Endothelial cell of umbilical vein (primary cell): ENCODE measurements at regions of chr3 and their contacts with region 1.

Region 1: GRCh38 chr3:71064288-71064955 is 519.1 kb downstream of the FOXP1 start:
- DNase-seq: peak; percentile 76
- H3K4me3 ChIP-seq: peak overlapping the region; percentile 64 to 93 (median 84)
- H3K27ac ChIP-seq: peak overlapping the region; percentile 83
- H3K4me1 ChIP-seq: peaks cover 55% of the 10 kb centered on the region
- H3K27me3 ChIP-seq: no peaks in the 10 kb centered on the region
- CTCF ChIP-seq: no peak
- POLR2A ChIP-seq: peak; percentile 24

Region 2: GRCh38 chr3:70531063-70531657 is 533.3 kb before region 1 on chr3:
- CTCF ChIA-PET with region 1: no interaction called
- POLR2A ChIA-PET with region 1: no interaction called
- dilution Hi-C with region 1: no loop called
- intact Hi-C with region 1: loop called (anchors 5 kb)
- DNase-seq: peak; percentile 52
- H3K4me3 ChIP-seq: no peak overlapping the region
- H3K27ac ChIP-seq: no peak overlapping the region
- H3K4me1 ChIP-seq: no peaks in the 10 kb centered on the region
- H3K27me3 ChIP-seq: peaks cover 7 to 9% of the 10 kb centered on the region in 2 experiments
- CTCF ChIP-seq: peak; percentile 7 to 28
- POLR2A ChIP-seq: no peak

Region 3: GRCh38 chr3:71006810-71007785 is 57.3 kb before region 1 on chr3:
- CTCF ChIA-PET with region 1: interaction called, 23 read pairs
- POLR2A ChIA-PET with region 1: interaction called, 3 read pairs
- dilution Hi-C with region 1: no loop called
- intact Hi-C with region 1: loop called (anchors 1 kb)
- DNase-seq: peak; percentile 75
- H3K4me3 ChIP-seq: no peak overlapping the region
- H3K27ac ChIP-seq: peak overlapping the region; percentile 53
- H3K4me1 ChIP-seq: peaks cover 54% of the 10 kb centered on the region
- H3K27me3 ChIP-seq: no peaks in the 10 kb centered on the region
- CTCF ChIP-seq: peak in 1 of 2 donors; percentile 15
- POLR2A ChIP-seq: no peak

Region 4: DNA sequence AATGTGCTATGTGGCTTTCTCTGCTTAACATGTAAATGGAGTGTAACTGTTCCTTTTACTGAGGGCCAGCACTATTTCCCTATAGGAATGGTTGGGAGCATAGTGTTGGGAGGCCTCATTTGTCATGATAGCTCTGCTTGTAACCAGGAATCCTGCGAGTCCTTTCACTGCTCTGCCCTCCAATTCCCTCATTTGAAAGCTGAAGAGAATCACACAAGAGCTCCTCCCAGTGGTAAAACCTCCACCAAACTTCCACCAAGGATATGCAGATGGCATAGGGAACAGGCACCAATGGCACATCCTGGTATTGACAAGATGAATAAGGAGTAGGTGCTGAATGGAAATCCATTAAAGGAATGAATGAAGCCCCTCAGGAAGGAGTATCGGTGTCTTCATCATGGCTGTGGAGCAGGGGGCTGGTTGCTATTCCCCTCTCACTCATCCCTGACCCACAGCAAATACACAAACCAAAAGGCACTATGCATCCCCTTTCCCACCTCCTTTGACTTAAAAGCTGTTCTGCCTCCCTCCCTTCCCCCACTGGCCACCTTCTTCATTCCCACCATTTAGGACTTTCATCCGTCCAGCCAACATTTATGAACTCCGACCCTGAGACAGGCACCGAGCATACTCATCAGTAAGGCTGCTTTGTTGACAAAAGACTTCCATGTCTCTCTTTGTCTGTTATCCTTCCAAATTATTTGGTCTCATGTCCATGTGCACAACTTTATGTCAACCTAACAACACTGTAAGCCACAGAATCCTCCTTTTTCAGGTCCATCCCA is 41.7 kb before region 1 on chr3:
- CTCF ChIA-PET with region 1: no interaction called
- POLR2A ChIA-PET with region 1: no interaction called
- dilution Hi-C with region 1: no loop called
- intact Hi-C with region 1: no loop called
- DNase-seq: peak; percentile 52
- H3K4me3 ChIP-seq: no peak overlapping the region
- H3K27ac ChIP-seq: no peak overlapping the region
- H3K4me1 ChIP-seq: no peaks in the 10 kb centered on the region
- H3K27me3 ChIP-seq: no peaks in the 10 kb centered on the region
- CTCF ChIP-seq: peak; percentile 20 to 30
- POLR2A ChIP-seq: no peak

Region 5: GRCh38 chr3:71050538-71051258 is 13.7 kb before region 1 on chr3:
- CTCF ChIA-PET with region 1: interaction called, 12 read pairs
- POLR2A ChIA-PET with region 1: interaction called, 7 read pairs
- dilution Hi-C with region 1: no loop called
- intact Hi-C with region 1: loop called (anchors 1 kb)
- DNase-seq: peak; percentile 91
- H3K4me3 ChIP-seq: no peak overlapping the region
- H3K27ac ChIP-seq: peak overlapping the region; percentile 88
- H3K4me1 ChIP-seq: peaks cover 97% of the 10 kb centered on the region
- H3K27me3 ChIP-seq: no peaks in the 10 kb centered on the region
- CTCF ChIP-seq: no peak
- POLR2A ChIP-seq: no peak

Region 6: GRCh38 chr3:71130471-71131374 is 66.3 kb after region 1 on chr3:
- CTCF ChIA-PET with region 1: interaction called, 5 read pairs
- POLR2A ChIA-PET with region 1: no interaction called
- dilution Hi-C with region 1: no loop called
- intact Hi-C with region 1: loop called (anchors 2 kb)
- DNase-seq: peak; percentile 84
- H3K4me3 ChIP-seq: peak overlapping the region; percentile 24 to 91 (median 87)
- H3K27ac ChIP-seq: peak overlapping the region; percentile 93
- H3K4me1 ChIP-seq: peaks cover 24% of the 10 kb centered on the region
- H3K27me3 ChIP-seq: no peaks in the 10 kb centered on the region
- CTCF ChIP-seq: no peak
- POLR2A ChIP-seq: no peak

Region 7: DNA sequence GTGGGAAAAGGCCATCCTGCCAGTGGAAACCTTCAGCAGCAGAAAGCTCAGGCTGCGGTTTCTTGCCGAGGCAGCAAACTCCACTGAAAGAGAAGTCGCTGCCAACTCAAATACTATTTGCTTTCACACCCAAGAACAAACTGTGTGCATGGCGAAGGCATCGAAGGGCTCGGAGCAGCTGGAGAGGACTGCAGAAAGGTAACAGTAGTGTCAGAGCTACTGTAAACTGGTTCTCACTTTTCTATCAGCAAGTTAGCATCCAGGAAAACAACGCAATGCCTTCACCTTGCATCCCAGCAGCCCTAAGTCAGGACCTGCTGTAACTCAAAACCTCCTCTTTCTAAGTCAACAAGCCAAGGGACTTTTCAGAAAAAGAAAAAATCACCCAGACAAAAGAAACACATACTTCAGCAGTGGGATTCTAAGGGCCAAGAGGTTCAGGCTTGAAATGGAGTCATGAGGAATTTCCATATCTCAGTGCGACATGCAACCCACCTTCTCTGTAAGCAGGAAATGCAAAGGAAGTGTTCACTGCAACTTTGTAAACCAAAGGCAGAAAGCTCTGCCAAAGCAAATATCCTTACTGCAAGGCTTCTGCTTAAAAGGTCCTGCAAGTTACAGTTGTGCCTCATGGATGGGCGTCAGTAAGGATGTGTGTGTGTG is 325.6 kb after region 1 on chr3:
- CTCF ChIA-PET with region 1: no interaction called
- POLR2A ChIA-PET with region 1: no interaction called
- dilution Hi-C with region 1: no loop called
- intact Hi-C with region 1: loop called (anchors 5 kb)
- DNase-seq: peak; percentile 95
- H3K4me3 ChIP-seq: peak overlapping the region in 1 of 3 experiments; percentile 29
- H3K27ac ChIP-seq: peak overlapping the region; percentile 88
- H3K4me1 ChIP-seq: peaks cover 41% of the 10 kb centered on the region
- H3K27me3 ChIP-seq: no peaks in the 10 kb centered on the region
- CTCF ChIP-seq: no peak
- POLR2A ChIP-seq: peak; percentile 37

Region 8: GRCh38 chr3:71652781-71653413 is 588.5 kb after region 1 on chr3:
- CTCF ChIA-PET with region 1: interaction called, 4 read pairs
- POLR2A ChIA-PET with region 1: no interaction called
- dilution Hi-C with region 1: no loop called
- intact Hi-C with region 1: loop called (anchors 2 kb)
- DNase-seq: peak; percentile 78
- H3K4me3 ChIP-seq: no peak overlapping the region
- H3K27ac ChIP-seq: no peak overlapping the region
- H3K4me1 ChIP-seq: peaks cover 9% of the 10 kb centered on the region
- H3K27me3 ChIP-seq: no peaks in the 10 kb centered on the region
- CTCF ChIP-seq: peak; percentile 17 to 42
- POLR2A ChIP-seq: no peak